Motor neuron (in vitro differentiated cells): ENCODE measurements at regions of chr9 and their contacts with region 1.

Region 1: DNA sequence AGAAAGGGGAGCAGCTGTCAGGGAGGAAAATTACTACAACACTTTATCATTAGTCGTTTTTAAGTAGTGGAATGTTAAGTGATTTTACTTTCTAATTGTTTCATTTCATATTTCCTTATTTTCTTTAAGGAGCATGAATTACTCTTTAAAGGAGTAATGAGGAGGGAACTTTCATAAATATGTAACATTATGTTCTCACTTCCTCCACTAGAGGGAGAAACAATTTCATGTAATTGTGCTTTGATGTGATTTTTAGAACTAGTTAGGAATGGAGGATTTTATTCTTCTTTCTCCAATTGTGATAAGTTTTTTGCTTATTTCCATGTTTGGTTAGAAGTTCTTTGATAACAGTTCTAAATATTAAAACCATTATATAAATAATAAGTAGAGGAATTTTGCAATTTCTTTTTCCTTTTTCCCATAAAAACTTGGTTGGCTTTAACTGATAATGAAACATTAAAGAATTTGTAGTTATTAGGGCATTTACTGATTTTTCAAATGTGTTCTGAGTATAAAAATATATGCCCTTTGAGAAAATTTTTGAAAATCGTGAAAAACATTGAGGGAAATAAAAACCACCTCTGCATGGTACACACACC is 25.6 kb downstream of the CEP78 start:
- ATAC-seq: no peak
- H3K4me3 ChIP-seq: no peak overlapping the region
- H3K27ac ChIP-seq: no peak overlapping the region
- H3K4me1 ChIP-seq: no peaks in the 10 kb centered on the region

Region 2: DNA sequence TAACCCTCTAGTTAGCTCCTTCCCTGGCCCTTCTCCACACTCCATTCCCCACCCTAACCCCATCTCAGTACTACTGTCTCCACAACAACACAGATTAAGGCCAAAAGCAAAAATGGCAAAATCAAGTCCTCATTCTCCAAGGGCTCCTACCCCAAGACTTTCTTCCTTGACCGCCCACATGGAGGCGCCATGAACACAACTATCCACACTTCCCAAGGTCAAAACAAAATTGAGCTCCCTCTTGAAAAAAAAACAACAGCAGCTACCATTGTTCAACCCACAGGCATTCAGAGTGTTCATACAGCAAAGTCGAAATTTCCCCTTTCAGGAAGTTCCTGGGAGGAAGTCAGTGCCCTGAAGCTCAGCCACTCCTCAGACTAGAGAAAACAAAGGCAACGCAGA is 284.3 kb before region 1 on chr9:
- in situ Hi-C with region 1: no loop called
- ATAC-seq: peak; percentile 21 to 72 (median 48)
- H3K4me3 ChIP-seq: no peak overlapping the region
- H3K27ac ChIP-seq: no peak overlapping the region
- H3K4me1 ChIP-seq: peaks cover 0 to 4% of the 10 kb centered on the region in 2 donors

Region 3: DNA sequence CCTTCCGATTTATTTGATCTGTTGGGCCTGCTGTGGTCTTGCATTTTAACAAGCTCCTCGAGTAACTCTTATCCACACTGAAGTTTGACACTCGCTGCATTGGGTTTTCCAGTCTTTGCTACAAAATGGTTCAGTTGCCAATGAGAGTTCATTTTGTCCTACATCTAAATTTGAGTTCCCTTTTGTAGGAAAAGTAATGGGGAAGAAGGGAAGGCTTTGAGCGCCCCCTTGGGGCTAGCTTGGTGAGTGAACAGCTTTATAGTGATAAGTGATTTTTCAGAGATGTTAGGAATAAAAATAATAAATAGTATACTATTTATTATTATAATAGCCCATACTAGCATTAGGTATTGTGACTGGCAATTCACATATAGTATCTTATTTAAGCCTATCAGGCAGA is 140.0 kb before region 1 on chr9:
- in situ Hi-C with region 1: no loop called
- ATAC-seq: peak in 3 of 8 experiments; percentile 5 to 47 (median 23)
- H3K4me3 ChIP-seq: no peak overlapping the region
- H3K27ac ChIP-seq: no peak overlapping the region
- H3K4me1 ChIP-seq: no peaks in the 10 kb centered on the region

Region 4: DNA sequence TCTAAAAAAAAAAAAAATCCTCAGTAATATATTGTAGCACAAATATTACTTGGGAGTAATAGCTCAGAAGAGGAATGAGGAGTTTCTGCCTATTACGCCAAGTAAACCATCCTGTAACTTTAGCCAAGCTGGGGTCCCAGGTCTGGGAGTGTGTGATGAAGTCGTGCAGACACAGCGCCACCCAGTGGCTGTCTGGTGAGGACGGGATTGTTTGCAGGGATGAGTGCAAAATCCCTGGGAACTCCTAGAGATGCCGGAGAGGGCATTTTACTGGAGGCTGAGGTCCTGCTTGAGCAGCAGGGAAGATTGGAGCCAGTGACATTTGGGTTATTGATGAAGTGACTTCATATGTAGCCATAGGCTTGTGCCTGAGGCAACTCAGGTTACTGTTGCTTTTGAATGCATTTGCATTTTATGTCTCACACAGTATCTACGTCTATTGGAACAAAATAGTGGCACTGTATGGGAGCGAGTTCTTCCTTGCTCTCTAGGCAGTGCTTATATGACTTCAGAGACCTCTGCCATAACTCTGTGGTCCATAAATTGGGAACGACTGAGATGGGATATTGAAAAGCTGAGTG is 108.2 kb after region 1 on chr9:
- in situ Hi-C with region 1: loop called in 1 of 9 experiments (anchors 25 kb)
- ATAC-seq: peak; percentile 48 to 95 (median 68)
- H3K4me3 ChIP-seq: no peak overlapping the region
- H3K27ac ChIP-seq: no peak overlapping the region
- H3K4me1 ChIP-seq: no peaks in the 10 kb centered on the region